GM13977 (cell line): ENCODE measurements at regions of chr14 and their contacts with region 1.

Region 1: DNA sequence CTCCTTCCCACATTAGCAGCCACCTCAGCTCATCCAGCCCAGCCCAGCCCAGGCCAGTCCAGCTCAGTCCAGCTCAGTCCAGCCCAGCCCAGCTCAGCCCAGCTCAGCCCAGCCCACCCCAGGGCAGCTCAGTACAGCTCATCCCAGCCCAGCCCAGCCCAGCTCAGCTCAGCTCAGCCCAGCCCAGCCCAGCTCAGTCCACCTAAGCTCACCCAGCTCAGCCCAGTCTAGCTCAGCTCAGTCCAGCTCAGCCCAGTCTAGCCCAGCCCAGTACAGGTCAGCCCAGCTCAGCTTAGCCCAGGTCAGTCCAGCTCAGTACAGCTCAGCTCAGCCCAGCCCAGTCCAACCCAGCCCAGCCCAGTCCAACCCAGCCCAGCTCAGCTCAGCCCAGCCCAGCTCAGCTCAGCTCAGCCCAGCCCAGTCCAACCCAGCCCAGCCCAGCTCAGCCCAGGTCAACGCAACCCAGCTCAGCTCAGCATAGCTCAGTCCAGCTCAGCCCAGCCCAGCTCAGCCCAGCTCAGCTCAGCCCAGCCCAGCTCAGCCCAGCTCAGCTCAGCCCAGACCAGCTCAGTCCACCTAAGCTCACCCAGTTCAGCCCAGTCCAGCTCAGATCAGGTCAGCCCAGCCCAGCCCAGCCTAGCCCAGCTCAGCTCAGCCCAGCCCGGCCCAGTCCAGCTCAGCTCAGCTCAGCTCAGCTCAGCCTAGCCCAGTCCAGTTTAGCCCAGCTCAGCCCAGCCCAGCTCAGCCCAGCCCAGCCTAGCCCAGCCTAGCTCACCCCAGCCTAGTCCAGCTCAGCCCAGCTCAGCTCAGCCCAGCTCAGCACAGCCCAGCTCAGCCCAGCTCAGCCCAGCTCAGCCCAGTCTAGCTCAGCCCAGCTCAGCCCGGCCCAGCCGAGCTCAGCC is 63.0 kb downstream of the TMEM121 start:
- DNase-seq: peak; percentile 22
- CTCF ChIP-seq: no peak

Region 2: GRCh38 chr14:105690692-105691091 is 101.3 kb after region 1 on chr14:
- in situ Hi-C with region 1: no loop called
- DNase-seq: no peak
- CTCF ChIP-seq: no peak

Region 3: DNA sequence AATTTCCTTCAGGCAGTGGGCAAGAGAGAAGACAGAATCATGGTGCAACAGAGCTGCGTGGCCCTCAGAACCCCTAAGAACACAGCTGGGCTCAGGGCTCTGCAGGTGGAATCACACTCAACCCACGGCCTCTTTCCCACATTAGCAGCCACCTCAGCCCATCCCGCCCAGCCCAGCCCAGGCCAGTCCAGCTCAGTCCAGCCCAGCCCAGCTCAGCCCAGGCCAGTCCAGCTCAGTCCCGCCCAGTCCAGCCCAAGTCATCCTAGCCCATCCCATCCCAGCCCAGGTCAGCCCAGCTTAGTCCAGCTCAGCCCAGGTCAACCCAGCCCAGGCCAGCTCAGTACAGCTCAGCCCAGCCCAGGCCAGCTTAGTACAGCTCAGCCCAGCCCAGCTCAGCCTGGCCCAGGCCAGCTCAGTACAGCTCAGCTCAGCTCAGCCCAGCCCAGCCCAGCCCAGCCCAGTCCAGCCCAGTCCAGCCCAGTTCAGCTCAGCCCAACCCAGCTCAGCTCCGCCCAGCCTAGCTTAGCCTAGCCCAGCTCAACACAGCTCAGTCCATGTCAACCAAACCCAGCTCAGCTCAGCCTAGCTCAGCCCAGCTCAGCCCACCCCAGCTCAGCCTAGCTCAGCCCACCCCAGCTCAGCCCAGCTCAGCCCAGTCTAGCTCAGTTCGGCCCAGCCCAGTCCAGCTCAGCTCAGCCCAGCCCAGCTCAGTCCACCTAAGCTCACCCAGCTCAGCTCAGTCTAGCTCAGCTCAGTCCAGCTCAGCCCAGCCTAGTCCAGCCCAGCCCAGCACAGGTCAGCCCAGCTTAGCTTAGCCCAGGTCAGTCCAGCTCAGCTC is 120.1 kb after region 1 on chr14:
- in situ Hi-C with region 1: loop called (anchors 5 kb)
- DNase-seq: no peak
- CTCF ChIP-seq: no peak